K562 (cell line): ENCODE measurements at regions of chr17 and their contacts with region 1.

Region 1: DNA sequence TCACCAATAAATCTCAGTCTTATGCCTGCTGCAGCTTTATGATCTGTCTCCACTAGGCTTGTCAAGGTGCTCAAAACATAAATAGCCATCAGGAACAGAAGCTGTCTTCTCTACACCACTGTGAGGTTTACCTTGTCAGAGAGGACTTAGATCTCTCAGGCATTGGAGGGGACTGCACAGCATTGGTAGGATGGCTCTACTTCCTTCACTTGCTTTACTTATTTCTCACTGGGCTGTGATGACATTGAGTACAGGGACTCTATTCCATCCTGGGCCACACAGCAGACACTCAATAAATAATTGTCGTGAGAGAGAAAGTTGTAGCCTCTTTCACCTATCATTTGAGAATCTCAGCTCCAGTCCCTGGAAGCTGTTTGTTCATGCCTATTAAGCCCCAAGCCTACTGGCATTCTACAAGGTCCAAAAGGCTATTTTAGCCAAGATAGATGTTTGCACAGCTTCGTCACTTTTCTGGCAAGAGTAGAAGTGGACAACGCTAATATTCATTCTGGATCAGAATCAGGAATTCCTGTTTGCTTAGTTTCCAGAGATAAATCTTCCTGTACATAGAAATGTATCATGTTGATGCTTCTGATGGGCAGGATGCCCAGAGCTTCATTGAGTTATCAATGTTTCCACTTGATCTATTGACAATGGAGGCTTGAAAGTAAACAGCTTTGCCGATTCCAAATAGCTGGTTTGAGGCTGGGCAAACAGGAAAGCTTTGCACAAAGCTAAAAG is 260.6 kb upstream of the CA10 start:
- DNase-seq: no peak
- ATAC-seq: no peak
- H3K4me3 ChIP-seq: no peak overlapping the region
- H3K27ac ChIP-seq: no peak overlapping the region
- H3K4me1 ChIP-seq: no peaks in the 10 kb centered on the region
- H3K27me3 ChIP-seq: no peaks in the 10 kb centered on the region
- CTCF ChIP-seq: no peak
- EP300 ChIP-seq: no peak
- POLR2A ChIP-seq: no peak
- RAD21 ChIP-seq: no peak

Region 2: GRCh38 chr17:51860954-51861561 is 558.0 kb before region 1 on chr17:
- CTCF ChIA-PET with region 1: no interaction called
- POLR2A ChIA-PET with region 1: no interaction called
- in situ Hi-C with region 1: no loop called
- intact Hi-C with region 1: loop called (anchors 10 kb)
- DNase-seq: peak; percentile 9 to 32 (median 20)
- ATAC-seq: no peak
- H3K4me3 ChIP-seq: no peak overlapping the region
- H3K27ac ChIP-seq: no peak overlapping the region
- H3K4me1 ChIP-seq: no peaks in the 10 kb centered on the region
- H3K27me3 ChIP-seq: no peaks in the 10 kb centered on the region
- CTCF ChIP-seq: peak; percentile 16 to 40 (median 26); a peak in 2 of 6 replicates
- EP300 ChIP-seq: no peak
- POLR2A ChIP-seq: no peak
- RAD21 ChIP-seq: 0 out of 4 replicates have a peak, but pooled peaks of 1 of the 2 experiments have one; percentile 17

Region 3: GRCh38 chr17:52306314-52306713 is 112.8 kb before region 1 on chr17:
- CTCF ChIA-PET with region 1: no interaction called
- POLR2A ChIA-PET with region 1: no interaction called
- in situ Hi-C with region 1: no loop called
- intact Hi-C with region 1: no loop called
- DNase-seq: no peak
- ATAC-seq: no peak
- H3K4me3 ChIP-seq: no peak overlapping the region
- H3K27ac ChIP-seq: no peak overlapping the region
- H3K4me1 ChIP-seq: no peaks in the 10 kb centered on the region
- H3K27me3 ChIP-seq: no peaks in the 10 kb centered on the region
- CTCF ChIP-seq: no peak
- EP300 ChIP-seq: no peak
- POLR2A ChIP-seq: no peak
- RAD21 ChIP-seq: no peak

Region 4: DNA sequence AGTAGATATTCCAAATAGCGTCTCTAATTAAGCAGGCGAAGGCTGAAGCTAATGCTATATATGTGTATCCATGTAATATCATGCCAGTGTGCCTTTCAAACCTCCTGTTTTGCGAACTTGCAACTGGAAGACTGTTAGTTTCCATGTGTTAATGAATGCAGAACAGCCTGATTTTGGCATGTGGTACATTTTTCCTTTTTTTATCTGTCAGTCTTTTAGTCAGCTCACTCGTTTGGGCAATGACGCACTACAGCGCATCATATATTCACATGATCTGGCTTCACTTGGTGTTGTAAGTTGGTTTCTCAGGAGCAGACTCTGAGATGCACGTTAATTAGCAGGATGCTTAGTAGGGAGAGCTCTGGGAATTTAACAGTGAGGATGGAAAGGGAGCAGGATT is 50.2 kb before region 1 on chr17:
- CTCF ChIA-PET with region 1: no interaction called
- POLR2A ChIA-PET with region 1: no interaction called
- in situ Hi-C with region 1: no loop called
- intact Hi-C with region 1: no loop called
- DNase-seq: no peak
- ATAC-seq: no peak
- H3K4me3 ChIP-seq: no peak overlapping the region
- H3K27ac ChIP-seq: no peak overlapping the region
- H3K4me1 ChIP-seq: no peaks in the 10 kb centered on the region
- H3K27me3 ChIP-seq: no peaks in the 10 kb centered on the region
- CTCF ChIP-seq: no peak
- EP300 ChIP-seq: no peak
- POLR2A ChIP-seq: no peak
- RAD21 ChIP-seq: no peak